Spleen (tissue), 13 donors: ENCODE measurements at regions of chr17 and their contacts with region 1.

Region 1: GRCh38 chr17:39863918-39864746 is at the start of gene IKZF3:
- DNase-seq: peak; percentile 93
- H3K4me3 ChIP-seq: peak within 1 kb of the TSS; percentile 37 to 72 (median 43)
- H3K27ac ChIP-seq: peak within 1 kb of the TSS; percentile 72 to 93 (median 86)
- H3K4me1 ChIP-seq: peaks cover 0 to 74% (median 41%) of the 10 kb centered on the region in 6 donors
- H3K27me3 ChIP-seq: peaks cover 0 to 86% (median 34%) of the 10 kb centered on the region in 7 donors
- CTCF ChIP-seq: peak in 9 of 11 experiments; percentile 8 to 49 (median 34)
- POLR2A ChIP-seq: no peak
- total RNA-seq, gene IKZF3: 79.1 to 132 (median 86.4) TPM

Region 2: GRCh38 chr17:39754161-39754951 is 109.8 kb before region 1 on chr17:
- intact Hi-C with region 1: loop called (anchors 10 kb)
- DNase-seq: peak; percentile 100
- H3K4me3 ChIP-seq: peak overlapping the region; percentile 46 to 87 (median 60)
- H3K27ac ChIP-seq: peak overlapping the region; percentile 95 to 99 (median 98)
- H3K4me1 ChIP-seq: peaks cover 43 to 76% (median 63%) of the 10 kb centered on the region in 6 donors
- H3K27me3 ChIP-seq: no peaks in the 10 kb centered on the region
- CTCF ChIP-seq: peak; percentile 96 to 100 (median 99)
- POLR2A ChIP-seq: peak in 1 of 3 donors; percentile 3